H1 (cell line): ENCODE measurements at regions of chr15 and their contacts with region 1.

Region 1: GRCh38 chr15:89129123-89129815 is 41.0 kb downstream of the ABHD2 start:
- DNase-seq: peak; percentile 33 to 80
- H3K4me3 ChIP-seq: no peak overlapping the region
- H3K27ac ChIP-seq: no peak overlapping the region
- H3K4me1 ChIP-seq: no peaks in the 10 kb centered on the region
- H3K27me3 ChIP-seq: no peaks in the 10 kb centered on the region
- CTCF ChIP-seq: peak; percentile 79 to 86 (median 84)
- EP300 ChIP-seq: no peak
- POLR2A ChIP-seq: no peak
- RAD21 ChIP-seq: peak; percentile 70 to 81

Region 2: DNA sequence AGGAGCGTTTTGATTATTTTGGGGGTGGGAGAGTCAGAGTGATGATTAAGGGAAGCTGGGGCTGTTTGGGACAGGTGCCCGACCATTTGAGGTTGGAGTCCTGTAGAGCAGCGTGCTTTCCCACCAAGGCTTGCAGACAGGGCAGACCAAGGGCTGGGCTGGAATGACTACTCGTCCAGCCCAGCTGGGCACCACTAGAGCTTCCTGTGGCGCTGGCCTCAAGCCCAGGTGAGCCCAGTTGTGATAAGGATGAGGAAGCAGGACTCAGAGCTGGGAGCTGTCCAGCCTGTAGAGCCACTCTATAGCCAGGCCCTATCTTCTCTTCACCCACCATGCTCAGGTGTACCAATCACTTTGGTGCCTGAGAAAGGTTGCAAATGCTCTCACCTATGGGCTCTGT is 401.8 kb before region 1 on chr15:
- CTCF ChIA-PET with region 1: no interaction called
- POLR2A ChIA-PET with region 1: no interaction called
- DNase-seq: no peak
- H3K4me3 ChIP-seq: no peak overlapping the region
- H3K27ac ChIP-seq: no peak overlapping the region
- H3K4me1 ChIP-seq: no peaks in the 10 kb centered on the region
- H3K27me3 ChIP-seq: no peaks in the 10 kb centered on the region
- CTCF ChIP-seq: no peak
- EP300 ChIP-seq: no peak
- POLR2A ChIP-seq: no peak
- RAD21 ChIP-seq: no peak

Region 3: DNA sequence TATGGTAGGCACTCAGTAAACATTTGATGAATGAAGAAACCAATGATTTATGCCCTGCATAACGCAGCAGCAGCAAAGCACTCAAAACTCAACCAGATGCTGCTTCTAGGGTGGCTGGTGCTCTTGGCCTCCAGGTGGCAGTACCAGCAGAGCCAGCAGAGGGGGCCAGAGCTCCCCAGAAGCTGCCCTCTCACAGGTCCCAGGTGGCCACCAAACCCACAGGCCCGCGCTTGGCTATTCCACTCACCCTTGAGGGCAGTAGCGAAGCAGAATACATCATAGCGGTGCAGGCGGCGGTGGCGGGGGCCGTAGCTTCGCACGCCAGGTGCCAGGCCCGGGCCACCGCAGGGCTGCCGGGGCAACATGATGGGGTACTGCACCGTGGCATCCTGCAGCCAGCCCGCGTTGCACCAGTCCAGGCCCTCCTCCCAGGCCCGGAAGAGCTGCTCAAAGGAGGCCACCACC is 250.5 kb before region 1 on chr15:
- CTCF ChIA-PET with region 1: interaction called, 11 read pairs
- POLR2A ChIA-PET with region 1: no interaction called
- DNase-seq: peak in 1 of 2 experiments; percentile 89
- H3K4me3 ChIP-seq: no peak overlapping the region
- H3K27ac ChIP-seq: no peak overlapping the region
- H3K4me1 ChIP-seq: peaks cover 0 to 6% (median under 1%) of the 10 kb centered on the region in 4 experiments; a peak in 3 of 7 replicates
- H3K27me3 ChIP-seq: no peaks in the 10 kb centered on the region
- CTCF ChIP-seq: peak; percentile 89 to 96 (median 95)
- EP300 ChIP-seq: no peak
- POLR2A ChIP-seq: no peak
- RAD21 ChIP-seq: peak; percentile 80 to 87

Region 4: DNA sequence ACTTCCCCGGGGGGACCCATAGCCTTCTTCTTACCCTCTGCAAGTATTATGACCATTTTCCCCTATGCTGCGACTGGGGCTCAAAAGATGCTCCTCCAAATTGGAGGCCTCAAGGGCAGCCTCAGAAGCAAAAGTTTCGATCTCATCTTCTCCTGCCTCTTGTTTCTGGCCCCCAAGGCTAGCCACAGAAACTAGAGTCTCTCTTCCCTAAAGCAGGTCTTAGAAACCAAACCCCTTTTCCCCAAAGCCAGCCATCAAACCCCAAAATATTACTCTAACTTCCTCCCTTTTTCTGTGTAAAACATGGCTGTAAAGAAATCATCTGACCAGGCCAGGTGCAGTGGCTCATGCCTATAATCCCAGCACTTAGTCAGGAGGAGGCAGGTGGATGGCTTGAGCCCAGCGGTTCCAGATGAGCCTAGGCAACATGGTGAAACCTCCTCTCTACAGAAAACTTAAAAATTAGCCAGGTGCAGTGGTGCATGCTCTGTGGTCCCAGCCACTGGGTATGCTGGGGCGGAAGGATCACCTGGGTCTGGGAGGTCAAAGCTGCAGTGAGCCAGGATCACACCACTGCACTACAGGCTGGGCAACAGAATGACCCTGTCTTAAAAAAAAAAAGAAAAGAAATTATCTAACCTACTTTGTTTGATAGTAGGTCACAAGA is 179.4 kb before region 1 on chr15:
- CTCF ChIA-PET with region 1: no interaction called
- POLR2A ChIA-PET with region 1: no interaction called
- DNase-seq: no peak
- H3K4me3 ChIP-seq: no peak overlapping the region
- H3K27ac ChIP-seq: no peak overlapping the region
- H3K4me1 ChIP-seq: peaks cover 0 to 5% (median 3%) of the 10 kb centered on the region in 4 experiments; a peak in 2 of 7 replicates
- H3K27me3 ChIP-seq: no peaks in the 10 kb centered on the region
- CTCF ChIP-seq: no peak
- EP300 ChIP-seq: no peak
- POLR2A ChIP-seq: no peak
- RAD21 ChIP-seq: no peak

Region 5: DNA sequence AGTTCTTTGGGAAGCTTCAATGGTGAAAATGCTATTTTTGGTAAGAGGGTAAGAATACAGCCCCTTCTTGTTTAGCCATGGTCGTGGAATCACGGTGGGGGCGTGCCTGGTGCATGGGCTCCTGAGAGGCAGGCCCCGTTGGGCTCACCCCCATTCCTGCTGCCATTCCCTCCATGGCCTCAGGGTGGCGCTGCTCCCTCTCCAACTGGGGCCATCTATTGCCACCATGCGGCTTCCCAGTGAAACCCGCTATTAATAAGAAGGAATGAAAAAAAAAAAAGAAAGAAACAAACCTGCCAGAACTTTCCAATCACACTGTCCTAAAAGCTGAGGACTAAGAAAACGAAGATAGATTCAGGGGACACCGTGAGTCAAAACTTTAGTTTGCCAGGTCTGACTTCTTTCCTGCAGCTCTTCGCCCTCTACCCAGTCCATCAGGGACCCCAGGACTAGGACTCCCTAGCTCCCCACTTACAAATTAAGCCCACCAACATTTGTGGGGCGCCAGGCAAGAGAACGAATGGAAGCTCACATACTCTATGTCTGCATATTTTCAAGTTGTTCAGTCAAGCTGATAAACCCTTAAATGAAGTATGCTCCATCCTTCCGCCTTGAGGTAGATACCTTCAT is 71.7 kb before region 1 on chr15:
- CTCF ChIA-PET with region 1: interaction called, 297 read pairs
- POLR2A ChIA-PET with region 1: interaction called, 3 read pairs
- DNase-seq: peak; percentile 60 to 99
- H3K4me3 ChIP-seq: no peak overlapping the region
- H3K27ac ChIP-seq: no peak overlapping the region
- H3K4me1 ChIP-seq: peaks cover 0 to 2% (median 0%) of the 10 kb centered on the region in 4 experiments; a peak in 4 of 7 replicates
- H3K27me3 ChIP-seq: 0 out of 7 replicates have a peak, but pooled peaks cover 0 to 3% (median 0%) of the 10 kb centered on the region in 4 experiments
- CTCF ChIP-seq: peak; percentile 92 to 100 (median 99)
- EP300 ChIP-seq: no peak
- POLR2A ChIP-seq: no peak
- RAD21 ChIP-seq: peak; percentile 96 to 98

Region 6: DNA sequence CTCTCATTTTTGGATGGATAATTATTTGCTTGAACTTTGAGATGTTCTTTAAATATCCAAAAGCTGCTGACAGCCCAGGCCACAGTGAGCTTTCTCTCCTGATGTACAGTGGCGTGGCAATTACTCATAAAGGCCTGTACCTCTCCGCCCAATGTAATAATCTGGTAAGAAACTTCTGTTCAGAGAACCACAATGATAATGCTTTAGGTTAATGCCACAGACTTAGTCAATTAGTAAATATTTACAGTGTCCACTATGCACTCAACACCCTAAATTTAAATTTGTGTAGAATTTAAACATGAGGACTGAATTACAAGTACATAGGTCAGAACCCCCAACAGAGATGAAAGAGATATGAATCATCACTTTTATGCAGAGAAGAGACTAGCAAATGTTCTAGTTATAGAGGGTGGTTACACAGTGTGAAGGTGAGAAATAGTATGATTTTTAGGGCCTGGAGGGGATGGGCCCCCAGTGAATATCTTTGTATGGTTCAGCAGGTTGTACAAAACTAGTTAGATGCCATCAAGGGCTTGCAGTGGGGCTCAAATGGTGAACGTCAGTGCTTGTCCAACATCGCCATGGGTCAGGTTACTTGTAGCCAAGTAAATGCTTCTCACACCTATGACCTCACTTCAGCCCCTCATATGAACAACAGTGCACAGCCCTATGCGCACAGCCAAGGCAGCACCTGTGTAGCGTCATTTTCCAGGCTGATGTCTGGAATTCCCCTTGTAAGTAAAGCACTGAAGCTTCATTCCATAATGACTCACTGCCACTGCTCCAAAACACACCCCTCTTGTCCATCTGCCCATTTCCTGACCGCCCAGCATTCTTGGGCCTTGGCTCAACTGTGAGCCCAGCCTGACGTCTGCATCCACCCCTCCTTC is 27.7 kb before region 1 on chr15:
- CTCF ChIA-PET with region 1: interaction called, 24 read pairs
- POLR2A ChIA-PET with region 1: no interaction called
- DNase-seq: no peak
- H3K4me3 ChIP-seq: no peak overlapping the region
- H3K27ac ChIP-seq: no peak overlapping the region
- H3K4me1 ChIP-seq: no peaks in the 10 kb centered on the region
- H3K27me3 ChIP-seq: no peaks in the 10 kb centered on the region
- CTCF ChIP-seq: no peak
- EP300 ChIP-seq: no peak
- POLR2A ChIP-seq: no peak
- RAD21 ChIP-seq: no peak

Region 7: GRCh38 chr15:89150762-89151664 is 21.7 kb after region 1 on chr15:
- CTCF ChIA-PET with region 1: interaction called, 50 read pairs
- POLR2A ChIA-PET with region 1: no interaction called
- DNase-seq: no peak
- H3K4me3 ChIP-seq: no peak overlapping the region
- H3K27ac ChIP-seq: no peak overlapping the region
- H3K4me1 ChIP-seq: no peaks in the 10 kb centered on the region
- H3K27me3 ChIP-seq: no peaks in the 10 kb centered on the region
- CTCF ChIP-seq: no peak
- EP300 ChIP-seq: no peak
- POLR2A ChIP-seq: no peak
- RAD21 ChIP-seq: no peak

Region 8: DNA sequence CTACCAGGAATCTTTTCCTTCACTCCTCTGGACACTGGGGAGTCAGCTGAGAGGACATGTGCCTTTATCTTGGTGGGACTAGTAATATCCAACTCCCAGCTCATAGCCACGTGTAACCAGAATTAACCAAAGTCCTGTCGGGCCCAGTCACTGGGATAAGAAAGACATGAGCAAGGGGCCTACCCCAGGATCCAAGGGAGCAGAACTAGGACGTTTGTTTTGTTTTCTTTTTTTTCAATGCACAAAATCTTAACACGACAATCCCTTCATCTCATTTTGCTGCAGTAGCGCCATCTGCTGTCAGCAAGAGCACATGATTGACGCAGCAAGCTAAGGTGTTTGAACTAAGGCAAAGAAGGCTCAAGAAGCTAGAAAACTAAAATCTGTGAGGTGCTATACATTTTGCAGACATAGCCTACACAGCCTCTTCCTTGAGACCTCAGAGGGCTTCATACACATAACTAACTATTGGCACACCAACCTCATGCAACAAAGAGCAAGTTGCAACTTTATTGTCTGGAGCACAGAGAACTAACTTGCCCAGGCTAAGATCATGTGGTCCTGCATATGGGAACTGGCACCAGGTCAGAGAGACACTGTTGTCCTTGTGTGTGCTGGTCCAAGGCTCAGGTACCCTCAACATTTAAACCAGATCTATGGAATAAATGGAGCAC is 48.5 kb after region 1 on chr15:
- CTCF ChIA-PET with region 1: interaction called, 84 read pairs
- POLR2A ChIA-PET with region 1: no interaction called
- DNase-seq: peak in 1 of 2 experiments; percentile 63
- H3K4me3 ChIP-seq: no peak overlapping the region
- H3K27ac ChIP-seq: no peak overlapping the region
- H3K4me1 ChIP-seq: no peaks in the 10 kb centered on the region
- H3K27me3 ChIP-seq: no peaks in the 10 kb centered on the region
- CTCF ChIP-seq: peak; percentile 41 to 90 (median 83)
- EP300 ChIP-seq: no peak
- POLR2A ChIP-seq: no peak
- RAD21 ChIP-seq: peak; percentile 86